IMR-90 (cell line): ENCODE measurements at regions of chr16 and their contacts with region 1.

Region 1: DNA sequence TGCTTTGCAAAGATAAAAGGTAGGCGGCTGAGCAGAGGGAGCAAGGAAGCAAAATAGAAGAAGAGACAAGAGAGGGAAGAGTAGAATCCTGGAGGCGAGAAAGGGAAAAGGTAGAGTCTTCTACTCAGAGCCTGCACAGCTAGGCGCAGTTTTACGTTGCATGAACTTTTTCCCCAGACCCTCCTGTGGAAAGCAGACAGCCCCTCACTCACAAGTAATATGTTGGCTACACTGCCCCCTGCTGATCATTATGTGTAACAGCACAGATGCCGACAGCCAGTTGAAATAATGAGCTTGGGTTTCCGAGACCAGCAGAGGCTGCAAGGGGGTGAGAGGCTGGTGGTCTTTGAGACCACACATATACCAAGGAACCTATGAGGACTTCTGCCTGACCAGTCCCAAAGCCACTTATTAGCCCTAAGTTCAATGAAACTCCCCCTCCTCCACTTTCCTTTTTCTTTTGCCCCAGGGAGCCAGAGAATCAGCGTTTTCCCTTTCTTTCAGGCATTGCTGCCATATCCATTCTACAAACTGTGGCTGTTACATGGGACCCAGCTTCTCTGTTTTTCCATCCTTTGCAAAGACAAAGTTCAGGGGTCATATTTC is 22.5 kb upstream of the CMTR2 start:
- DNase-seq: peak; percentile 5
- ATAC-seq: peak; percentile 61
- H3K4me3 ChIP-seq: no peak overlapping the region
- H3K27ac ChIP-seq: no peak overlapping the region
- H3K4me1 ChIP-seq: no peaks in the 10 kb centered on the region
- H3K27me3 ChIP-seq: no peaks in the 10 kb centered on the region; the same call in 1 of the 2 replicates
- CTCF ChIP-seq: peak; percentile 58
- POLR2A ChIP-seq: no peak
- RAD21 ChIP-seq: peak; percentile 62

Region 2: DNA sequence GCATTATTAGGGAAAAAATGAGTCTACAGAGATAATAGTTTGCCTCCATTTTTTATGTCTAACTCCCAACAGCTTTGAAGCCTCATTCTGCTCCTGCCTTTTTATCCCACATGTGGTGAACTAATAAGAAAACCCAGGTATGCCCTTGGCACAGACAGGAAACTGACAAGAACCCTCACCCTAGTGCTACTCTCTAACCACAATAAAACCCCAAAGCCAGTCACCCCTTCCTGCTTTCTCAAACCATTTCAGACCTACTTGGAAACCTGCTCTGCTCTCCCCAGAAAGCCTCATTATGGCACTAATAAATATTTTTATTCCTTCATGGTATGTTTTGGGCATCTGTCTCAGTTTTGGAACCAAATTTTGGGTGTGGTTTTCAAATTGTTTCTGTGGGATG is 310.4 kb after region 1 on chr16:
- CTCF ChIA-PET with region 1: interaction called, 12 read pairs
- POLR2A ChIA-PET with region 1: no interaction called
- dilution Hi-C with region 1: no loop called
- in situ Hi-C with region 1: no loop called
- intact Hi-C with region 1: no loop called
- DNase-seq: no peak
- ATAC-seq: no peak
- H3K4me3 ChIP-seq: no peak overlapping the region
- H3K27ac ChIP-seq: no peak overlapping the region
- H3K4me1 ChIP-seq: peaks cover 3% of the 10 kb centered on the region; the same call in 1 of the 2 replicates
- H3K27me3 ChIP-seq: peaks cover 27% of the 10 kb centered on the region
- CTCF ChIP-seq: no peak
- POLR2A ChIP-seq: no peak
- RAD21 ChIP-seq: no peak